ENCODE measurements at regions of chr16 and their contacts with region 1.

Region 1: DNA sequence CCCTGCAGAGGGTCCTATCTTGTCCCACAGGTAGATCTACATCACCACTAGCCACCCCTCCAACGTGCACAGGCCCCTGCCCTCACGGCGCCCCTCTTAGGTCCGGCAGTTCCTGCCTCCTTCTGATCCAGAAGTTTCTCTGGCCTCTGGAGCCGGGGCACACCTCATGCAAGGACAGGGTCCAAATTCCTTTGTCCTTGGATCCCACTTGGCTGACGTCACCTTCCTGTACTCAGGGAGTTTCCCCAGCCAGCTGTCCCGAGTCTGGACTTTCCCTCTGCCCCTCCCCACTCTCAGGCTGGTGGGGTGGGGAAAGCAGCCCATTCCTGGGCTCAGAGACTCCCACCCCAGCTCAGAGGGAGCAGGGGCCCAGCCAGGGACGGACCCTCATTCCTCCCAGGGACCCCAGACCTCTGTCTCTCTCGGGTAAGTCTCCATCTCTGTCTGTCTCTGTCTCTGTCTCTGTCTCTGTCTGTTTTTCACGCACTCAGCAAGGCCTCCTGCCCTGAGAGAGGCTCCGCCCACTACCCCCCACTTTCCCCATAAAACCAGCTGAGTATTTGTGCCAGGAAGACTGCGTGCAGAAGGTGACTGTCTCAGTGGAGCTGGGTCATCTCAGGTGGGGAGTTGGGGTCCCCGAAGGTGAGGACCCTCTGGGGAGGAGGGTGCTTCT is at the start of gene IL32:
- DNase-seq: peak; percentile 72 to 88 (median 83)
- ATAC-seq: peak; percentile 82 to 94 (median 86)
- H3K4me3 ChIP-seq: peak within 1 kb of the TSS; percentile 30 to 71 (median 60)
- H3K27ac ChIP-seq: peak within 1 kb of the TSS; percentile 62 to 95 (median 87)
- H3K4me1 ChIP-seq: peaks cover 0 to 56% (median 14%) of the 10 kb centered on the region in 12 donors
- H3K27me3 ChIP-seq: no peaks in the 10 kb centered on the region
- CTCF ChIP-seq: no peak
- POLR2A ChIP-seq: peak in 1 of 2 donors; percentile 38
- total RNA-seq, gene IL32: 20.6 to 241 (median 48.9) TPM

Region 2: GRCh38 chr16:2942045-2942444 is 123.2 kb before region 1 on chr16:
- intact Hi-C with region 1: no loop called
- DNase-seq: no peak
- ATAC-seq: no peak
- H3K4me3 ChIP-seq: no peak overlapping the region
- H3K27ac ChIP-seq: no peak overlapping the region
- H3K4me1 ChIP-seq: no peaks in the 10 kb centered on the region
- H3K27me3 ChIP-seq: no peaks in the 10 kb centered on the region
- CTCF ChIP-seq: no peak
- POLR2A ChIP-seq: no peak

Region 3: DNA sequence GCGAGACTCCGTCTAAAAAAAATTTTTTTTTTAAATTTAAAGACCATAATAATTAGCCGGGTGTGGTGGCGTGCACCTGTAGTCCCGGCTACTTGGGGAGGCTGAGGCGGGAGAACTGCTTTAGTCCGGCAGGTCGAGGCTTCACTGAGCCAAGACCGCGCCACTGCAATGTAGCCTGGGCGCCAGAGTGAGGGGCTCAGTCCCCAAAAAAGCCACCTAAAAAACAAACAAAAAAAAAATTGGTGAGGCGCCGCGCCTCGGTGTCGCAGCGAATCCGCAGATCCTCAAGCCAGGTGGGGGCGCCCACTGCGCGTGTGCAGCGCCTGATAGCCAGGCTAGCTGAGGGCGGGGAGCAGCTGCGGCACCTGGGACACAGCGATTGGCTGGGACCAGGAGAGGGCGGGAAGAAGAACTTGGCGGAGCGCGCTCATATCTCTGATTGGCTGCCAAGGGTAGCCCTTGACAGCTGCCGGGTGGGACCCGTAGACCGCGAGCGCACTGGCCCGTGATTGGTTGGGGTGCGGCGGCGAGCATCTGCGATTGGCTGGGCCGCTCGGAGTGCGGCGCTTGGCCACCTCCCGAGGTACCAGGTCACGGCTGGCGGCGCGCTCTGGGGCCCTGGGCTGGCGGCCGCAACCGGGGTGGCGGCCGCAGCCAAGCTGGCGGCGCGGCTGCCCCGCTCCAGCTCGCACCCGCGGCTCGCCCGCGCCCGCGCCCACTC is 61.5 kb before region 1 on chr16:
- intact Hi-C with region 1: no loop called
- DNase-seq: peak; percentile 95 to 99 (median 97)
- ATAC-seq: peak; percentile 99
- H3K4me3 ChIP-seq: peak overlapping the region in 10 of 12 donors; percentile 15 to 53 (median 28)
- H3K27ac ChIP-seq: peak overlapping the region in 1 of 12 donors; percentile 67
- H3K4me1 ChIP-seq: peaks cover 0 to 28% (median 4%) of the 10 kb centered on the region in 12 donors
- H3K27me3 ChIP-seq: peaks cover 0 to 51% (median 21%) of the 10 kb centered on the region in 9 donors
- CTCF ChIP-seq: peak; percentile 7 to 69 (median 55)
- POLR2A ChIP-seq: peak in 1 of 2 donors; percentile 40

Region 4: DNA sequence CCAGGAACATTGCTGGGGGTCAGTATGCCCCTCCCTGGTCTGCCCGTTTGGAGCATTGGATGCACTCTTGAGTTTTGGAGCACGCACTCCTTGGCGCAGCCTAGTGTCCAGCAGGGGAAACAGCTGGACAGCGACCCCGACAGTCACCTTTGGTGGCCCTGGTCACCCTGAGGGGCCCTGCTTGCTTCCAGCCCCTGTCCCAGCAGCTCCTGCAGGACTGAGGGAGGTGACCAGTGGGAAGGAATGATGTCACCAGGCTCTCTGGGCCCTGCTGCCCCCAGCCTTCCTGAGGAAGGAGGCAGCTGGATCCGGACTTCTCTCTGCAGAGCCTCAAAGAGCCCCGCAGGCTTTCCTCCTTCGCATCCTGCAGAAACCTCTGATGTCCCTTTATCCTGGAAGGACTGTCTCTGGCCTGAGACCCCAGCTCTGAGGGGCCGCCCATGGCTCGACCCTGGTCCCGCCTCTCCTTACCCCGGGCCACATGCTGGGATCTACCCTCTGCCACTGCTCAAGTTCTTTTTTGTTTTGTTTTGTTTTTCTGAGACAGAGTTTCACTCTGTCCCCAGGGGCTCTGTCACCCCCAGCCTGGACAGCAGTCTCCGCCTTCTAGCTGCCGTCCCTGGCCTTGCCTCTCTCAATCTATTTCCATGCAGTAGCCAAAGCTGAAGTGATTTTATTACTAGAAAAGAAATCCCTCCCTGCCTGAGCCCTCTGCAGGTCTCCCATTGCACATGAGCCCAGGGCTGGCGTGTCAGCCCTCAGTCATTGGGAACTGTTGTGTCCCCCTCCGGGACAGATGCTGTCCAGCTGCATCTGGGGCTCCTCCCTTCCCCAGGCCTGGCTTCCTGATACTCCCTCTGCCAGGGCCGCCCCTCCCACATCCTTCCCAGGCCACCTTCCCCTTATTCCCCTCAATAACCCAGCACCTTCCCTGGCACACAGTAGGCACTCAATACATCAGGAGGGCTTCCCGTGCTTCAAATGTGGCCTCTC is 22.3 kb after region 1 on chr16:
- intact Hi-C with region 1: loop called in 1 of 10 experiments (anchors 2 kb)
- DNase-seq: peak; percentile 59 to 84 (median 66)
- ATAC-seq: peak; percentile 72 to 90 (median 74)
- H3K4me3 ChIP-seq: peak overlapping the region in 11 of 12 donors; percentile 14 to 63 (median 51)
- H3K27ac ChIP-seq: peak overlapping the region; percentile 59 to 94 (median 86)
- H3K4me1 ChIP-seq: peaks cover 4 to 43% (median 19%) of the 10 kb centered on the region in 12 donors
- H3K27me3 ChIP-seq: peaks cover 0 to 7% (median 0%) of the 10 kb centered on the region in 9 donors
- CTCF ChIP-seq: peak in 8 of 12 donors; percentile 11 to 45 (median 28)
- POLR2A ChIP-seq: peak in 1 of 2 donors; percentile 13

Region 5: DNA sequence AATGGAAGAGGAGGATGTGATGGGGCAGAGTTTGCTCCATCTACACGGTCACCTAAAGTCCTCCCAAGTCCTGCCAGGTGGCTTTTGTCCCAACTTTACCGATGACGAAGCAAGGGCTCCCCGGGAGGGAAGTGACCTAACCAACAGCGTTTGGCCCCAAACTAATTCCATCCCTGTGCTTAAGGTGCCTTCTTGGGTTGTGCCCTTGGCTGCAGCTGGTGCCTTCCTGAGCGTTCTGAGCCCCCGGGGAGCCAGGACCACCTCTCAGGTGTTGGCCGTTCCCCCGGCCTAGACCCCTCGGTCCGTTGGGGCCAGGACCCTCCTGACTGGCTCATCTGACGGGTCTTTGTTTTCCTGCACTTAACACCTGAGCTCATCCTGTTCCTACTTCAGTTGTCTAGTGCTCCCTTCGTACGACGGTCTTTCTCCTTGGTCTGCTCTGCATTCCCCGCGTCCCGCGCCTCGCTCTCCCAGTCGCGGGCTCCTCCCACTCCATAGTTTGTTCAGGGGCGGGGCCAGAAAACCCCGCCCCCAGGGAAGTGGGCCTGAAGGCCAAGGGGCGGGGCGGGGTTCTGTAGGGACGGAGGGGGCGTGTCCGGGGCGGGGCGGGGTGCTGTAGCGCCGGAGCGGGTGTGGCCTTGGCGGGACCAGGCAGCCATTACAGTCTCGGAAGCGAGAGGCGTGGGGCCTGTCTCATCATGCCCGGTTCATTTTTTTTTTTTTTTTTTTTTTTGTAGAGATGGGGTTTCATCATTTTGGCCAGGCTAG is 34.7 kb after region 1 on chr16:
- intact Hi-C with region 1: loop called in 3 of 10 experiments (anchors 5 kb)
- DNase-seq: peak; percentile 92 to 96 (median 93)
- ATAC-seq: peak; percentile 76 to 96 (median 94)
- H3K4me3 ChIP-seq: peak overlapping the region in 9 of 12 donors; percentile 17 to 40 (median 31)
- H3K27ac ChIP-seq: peak overlapping the region in 9 of 12 donors; percentile 55 to 91 (median 80)
- H3K4me1 ChIP-seq: peaks cover 9 to 48% (median 23%) of the 10 kb centered on the region in 12 donors
- H3K27me3 ChIP-seq: no peaks in the 10 kb centered on the region
- CTCF ChIP-seq: no peak
- POLR2A ChIP-seq: peak in 1 of 2 donors; percentile 9

Measured in heart left ventricle (tissue), 16 donors.